ENCODE measurements at regions of chr11 and their contacts with region 1.

Region 1: DNA sequence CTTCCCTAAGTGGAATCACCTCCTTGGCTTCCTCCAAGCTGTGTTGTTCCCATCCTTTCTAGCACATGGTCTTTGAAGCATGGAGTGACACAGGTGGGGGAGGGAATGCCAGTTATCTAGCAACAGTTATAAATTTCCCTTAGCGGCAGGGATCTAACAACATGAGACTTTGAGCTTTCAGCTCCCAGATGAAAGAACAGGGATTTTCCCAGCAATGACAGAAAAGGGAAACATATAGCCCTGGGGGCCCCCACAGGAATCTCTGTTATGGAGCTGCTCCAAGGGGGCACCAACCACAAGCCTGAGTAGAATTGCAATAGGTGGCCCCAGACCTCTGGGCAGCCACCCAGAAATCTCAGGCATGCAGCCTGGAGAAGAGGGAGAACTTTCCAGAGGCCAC is 163.0 kb downstream of the GRIK4 start:
- DNase-seq: peak; percentile 22
- ATAC-seq: peak; percentile 42
- H3K4me3 ChIP-seq: no peak overlapping the region
- H3K27ac ChIP-seq: no peak overlapping the region
- H3K4me1 ChIP-seq: peaks cover 2% of the 10 kb centered on the region; the same call in 1 of the 2 replicates
- H3K27me3 ChIP-seq: peaks cover 9% of the 10 kb centered on the region; the same call in 1 of the 2 replicates
- CTCF ChIP-seq: no peak
- POLR2A ChIP-seq: no peak
- RAD21 ChIP-seq: no peak

Region 2: DNA sequence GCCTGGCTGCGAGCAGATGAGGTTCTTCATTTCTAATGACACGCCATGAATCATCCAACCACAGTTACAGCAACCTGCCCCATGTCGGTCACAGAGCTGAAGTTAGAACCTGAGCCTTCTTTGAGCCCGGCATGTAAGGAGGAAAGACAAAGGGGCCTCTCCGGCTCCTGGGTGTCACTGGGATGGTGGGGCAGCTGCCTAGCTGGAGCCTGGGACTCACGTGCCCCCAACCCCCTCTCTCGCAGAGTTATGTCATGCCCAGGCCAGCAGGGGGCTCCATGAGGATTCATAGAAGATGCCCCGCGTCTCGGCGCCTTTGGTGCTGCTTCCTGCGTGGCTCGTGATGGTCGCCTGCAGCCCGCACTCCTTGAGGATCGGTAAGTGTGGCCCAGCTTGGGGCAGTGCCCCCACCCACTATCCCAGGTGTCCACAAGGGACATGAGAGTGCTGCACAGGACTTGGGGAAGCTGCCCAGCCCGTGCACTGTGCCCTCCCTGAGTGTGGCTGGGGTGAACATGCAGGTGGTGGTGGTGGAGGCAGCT is 14.4 kb before region 1 on chr11:
- CTCF ChIA-PET with region 1: no interaction called
- POLR2A ChIA-PET with region 1: no interaction called
- dilution Hi-C with region 1: no loop called
- in situ Hi-C with region 1: no loop called
- intact Hi-C with region 1: no loop called
- DNase-seq: peak; percentile 36
- ATAC-seq: no peak
- H3K4me3 ChIP-seq: no peak overlapping the region
- H3K27ac ChIP-seq: no peak overlapping the region
- H3K4me1 ChIP-seq: no peaks in the 10 kb centered on the region
- H3K27me3 ChIP-seq: peaks cover 26% of the 10 kb centered on the region
- CTCF ChIP-seq: peak; percentile 36
- POLR2A ChIP-seq: no peak
- RAD21 ChIP-seq: no peak

Region 3: DNA sequence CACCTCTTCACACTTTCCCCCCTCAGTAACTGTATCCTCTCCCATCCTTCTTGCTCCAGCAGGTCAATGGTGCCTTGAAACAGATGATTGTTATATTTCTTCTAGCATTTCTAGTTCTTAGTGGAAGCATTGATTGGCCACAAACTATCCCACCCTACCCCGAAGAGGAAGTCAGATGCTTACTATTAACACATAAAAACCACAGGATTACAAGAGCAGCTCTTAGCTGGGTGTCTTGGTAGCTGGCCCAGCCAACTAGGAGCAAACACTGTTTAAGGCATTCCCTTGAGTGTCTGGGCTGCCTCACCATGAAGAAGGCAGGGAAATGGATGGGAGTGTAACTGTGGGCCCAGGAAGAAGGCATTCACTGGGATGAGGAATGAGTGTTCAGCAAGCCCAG is 13.6 kb after region 1 on chr11:
- CTCF ChIA-PET with region 1: interaction called, 13 read pairs
- POLR2A ChIA-PET with region 1: no interaction called
- dilution Hi-C with region 1: no loop called
- in situ Hi-C with region 1: no loop called
- intact Hi-C with region 1: no loop called
- DNase-seq: no peak
- ATAC-seq: no peak
- H3K4me3 ChIP-seq: no peak overlapping the region
- H3K27ac ChIP-seq: no peak overlapping the region
- H3K4me1 ChIP-seq: no peaks in the 10 kb centered on the region
- H3K27me3 ChIP-seq: peaks cover 36% of the 10 kb centered on the region
- CTCF ChIP-seq: no peak
- POLR2A ChIP-seq: no peak
- RAD21 ChIP-seq: no peak

Region 4: GRCh38 chr11:120830085-120830620 is 155.6 kb after region 1 on chr11:
- CTCF ChIA-PET with region 1: no interaction called
- POLR2A ChIA-PET with region 1: no interaction called
- dilution Hi-C with region 1: no loop called
- in situ Hi-C with region 1: no loop called
- intact Hi-C with region 1: no loop called
- DNase-seq: no peak
- ATAC-seq: no peak
- H3K4me3 ChIP-seq: no peak overlapping the region
- H3K27ac ChIP-seq: no peak overlapping the region
- H3K4me1 ChIP-seq: no peaks in the 10 kb centered on the region
- H3K27me3 ChIP-seq: peaks cover 5% of the 10 kb centered on the region
- CTCF ChIP-seq: no peak
- POLR2A ChIP-seq: no peak
- RAD21 ChIP-seq: no peak